Stomach (tissue), 19 donors: ENCODE measurements at regions of chr14 and their contacts with region 1.

Region 1: GRCh38 chr14:59905188-59905587 is 14.8 kb upstream of the LRRC9 start:
- DNase-seq: no peak
- H3K4me3 ChIP-seq: no peak overlapping the region
- H3K27ac ChIP-seq: no peak overlapping the region
- H3K4me1 ChIP-seq: no peaks in the 10 kb centered on the region
- H3K27me3 ChIP-seq: no peaks in the 10 kb centered on the region
- CTCF ChIP-seq: no peak
- EP300 ChIP-seq: no peak
- POLR2A ChIP-seq: no peak

Region 2: GRCh38 chr14:59711080-59711479 is 194.1 kb before region 1 on chr14:
- intact Hi-C with region 1: loop called (anchors 10 kb)
- DNase-seq: no peak
- H3K4me3 ChIP-seq: no peak overlapping the region
- H3K27ac ChIP-seq: no peak overlapping the region
- H3K4me1 ChIP-seq: no peaks in the 10 kb centered on the region
- H3K27me3 ChIP-seq: no peaks in the 10 kb centered on the region
- CTCF ChIP-seq: no peak
- EP300 ChIP-seq: no peak
- POLR2A ChIP-seq: no peak

Region 3: DNA sequence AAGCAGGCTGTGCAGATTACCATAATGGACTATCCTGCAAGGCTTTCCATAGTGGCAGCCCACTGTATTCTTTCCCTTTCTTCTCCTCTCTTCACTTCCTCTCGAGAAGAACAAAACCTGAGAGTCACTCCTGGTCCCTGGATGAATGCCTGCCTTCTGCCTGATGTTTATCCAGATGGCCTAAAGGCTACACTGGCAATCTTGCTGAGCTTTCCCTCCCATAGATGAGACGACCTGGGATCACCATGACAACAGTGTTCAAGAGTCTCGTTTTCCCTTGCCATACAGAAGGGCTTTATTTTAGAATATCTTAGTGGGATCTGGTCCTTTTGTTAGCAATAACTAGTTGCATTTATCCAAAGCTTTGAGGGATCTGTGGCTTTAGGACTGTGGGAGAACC is 176.9 kb before region 1 on chr14:
- intact Hi-C with region 1: no loop called
- DNase-seq: peak in 1 of 2 donors; percentile 11
- H3K4me3 ChIP-seq: no peak overlapping the region
- H3K27ac ChIP-seq: no peak overlapping the region
- H3K4me1 ChIP-seq: no peaks in the 10 kb centered on the region
- H3K27me3 ChIP-seq: no peaks in the 10 kb centered on the region
- CTCF ChIP-seq: no peak
- EP300 ChIP-seq: no peak
- POLR2A ChIP-seq: no peak

Region 4: DNA sequence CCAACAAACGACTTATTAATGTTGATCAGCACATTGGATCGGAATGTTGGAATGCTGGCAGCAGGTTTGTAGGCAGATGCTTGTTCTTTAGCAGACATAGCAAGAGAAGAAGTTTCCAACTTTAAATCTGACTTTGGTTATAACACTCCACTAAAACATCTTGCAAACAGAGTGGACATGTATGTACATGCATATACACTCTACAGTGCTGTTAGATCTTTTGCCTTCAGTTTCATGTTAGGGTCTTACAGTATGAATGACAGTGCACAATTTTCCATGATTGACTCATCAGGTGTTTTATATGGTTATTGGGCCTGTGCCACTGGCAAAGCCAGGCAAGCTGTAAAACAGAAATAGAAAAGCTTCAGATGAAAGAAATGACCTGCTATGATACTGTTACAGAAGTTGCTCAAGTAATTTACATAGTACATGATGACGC is 274.3 kb after region 1 on chr14:
- intact Hi-C with region 1: no loop called
- DNase-seq: peak in 1 of 2 donors; percentile 21
- H3K4me3 ChIP-seq: no peak overlapping the region
- H3K27ac ChIP-seq: peak overlapping the region in 1 of 5 donors; percentile 9
- H3K4me1 ChIP-seq: peaks cover 0 to 8% (median 2%) of the 10 kb centered on the region in 4 donors
- H3K27me3 ChIP-seq: no peaks in the 10 kb centered on the region
- CTCF ChIP-seq: no peak
- EP300 ChIP-seq: no peak
- POLR2A ChIP-seq: no peak

Region 5: DNA sequence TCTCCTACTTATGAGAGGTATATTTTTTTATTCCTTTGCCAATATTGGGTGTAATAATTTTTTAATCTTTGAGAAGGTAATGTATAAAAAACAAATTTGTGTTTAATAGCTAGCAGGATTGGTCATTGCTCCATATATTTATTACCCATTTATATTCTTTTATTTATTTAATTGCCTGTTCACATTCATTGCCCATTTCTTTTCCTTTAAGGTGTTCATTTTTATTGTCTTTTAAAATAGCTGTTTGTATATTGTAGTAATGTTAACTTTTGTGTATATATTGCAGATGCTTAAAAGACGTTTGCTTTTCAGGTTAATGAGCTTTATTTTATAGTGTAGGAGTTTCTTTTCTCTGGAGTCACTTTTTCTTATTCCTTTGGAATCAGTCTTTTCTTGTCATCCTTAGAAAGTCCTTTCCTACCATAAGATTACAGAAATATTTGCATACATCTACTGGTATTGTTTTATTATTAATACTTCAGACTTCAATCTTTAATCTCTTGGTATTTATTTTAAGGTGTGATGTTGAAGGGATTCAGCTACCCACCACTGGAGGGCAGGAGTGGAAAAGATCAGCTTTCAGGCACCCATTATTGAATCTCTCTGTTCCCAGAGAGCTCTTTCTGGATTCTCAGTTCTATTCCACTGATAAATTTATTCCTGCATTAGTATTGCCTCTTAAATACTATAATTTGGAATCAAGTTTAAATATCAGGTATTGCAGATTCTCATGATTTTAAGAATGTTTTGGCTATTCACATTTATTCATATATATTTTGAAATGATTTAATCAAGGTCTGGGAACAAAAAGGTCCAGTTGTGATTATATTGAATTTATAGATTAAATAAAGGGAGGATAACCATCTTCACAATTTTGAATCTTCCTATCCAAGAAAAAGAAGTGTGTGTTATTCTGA is 361.1 kb after region 1 on chr14:
- intact Hi-C with region 1: no loop called
- DNase-seq: no peak
- H3K4me3 ChIP-seq: no peak overlapping the region
- H3K27ac ChIP-seq: no peak overlapping the region
- H3K4me1 ChIP-seq: peaks cover 0 to 20% (median 10%) of the 10 kb centered on the region in 4 donors
- H3K27me3 ChIP-seq: no peaks in the 10 kb centered on the region
- CTCF ChIP-seq: peak in 3 of 7 experiments; percentile 13 to 42 (median 21)
- EP300 ChIP-seq: no peak
- POLR2A ChIP-seq: no peak